ENCODE measurements at regions of chr5 and their contacts with region 1.

Region 1: DNA sequence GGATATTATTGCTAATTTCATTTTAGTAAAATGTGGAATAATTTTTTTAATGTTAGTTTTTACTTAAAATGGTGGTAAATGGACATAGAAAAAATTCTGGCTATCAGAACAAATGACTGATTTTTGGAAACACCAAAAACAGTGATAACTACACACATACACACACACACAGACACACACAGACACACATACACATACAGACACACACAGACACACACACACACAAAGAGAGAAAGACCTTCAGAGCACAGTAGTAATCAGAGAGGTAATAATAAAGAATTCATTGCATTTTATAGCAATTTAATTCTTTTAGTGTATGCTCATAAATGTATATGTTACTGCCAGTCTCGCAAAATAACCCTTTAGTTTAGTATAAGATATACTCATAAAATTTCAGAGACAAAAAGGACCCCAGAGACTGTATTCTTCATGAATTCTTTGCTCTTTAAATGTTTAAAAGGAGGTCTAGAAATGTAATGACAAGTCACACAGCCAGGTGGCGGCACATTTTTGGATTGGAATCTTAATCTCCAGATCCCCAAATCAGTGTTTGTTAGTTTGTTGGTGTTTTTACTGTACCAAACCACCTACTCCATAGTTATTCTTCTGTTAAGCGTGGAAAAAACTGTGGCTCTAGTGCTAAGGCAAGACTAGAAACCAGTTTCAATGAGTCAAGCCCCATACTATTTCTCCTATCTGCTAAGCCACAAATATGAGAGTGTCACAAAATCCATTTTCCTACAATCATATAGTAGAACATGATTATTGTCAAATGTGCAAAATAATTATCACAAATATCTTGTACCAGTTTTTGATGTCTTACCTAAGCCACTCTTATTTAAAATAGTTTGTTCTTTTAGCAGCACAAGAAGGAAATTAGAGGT is 109.9 kb downstream of the EDIL3 start:
- DNase-seq: peak in 1 of 5 donors; percentile 9
- ATAC-seq: no peak
- H3K4me3 ChIP-seq: no peak overlapping the region
- H3K27ac ChIP-seq: no peak overlapping the region
- H3K4me1 ChIP-seq: peaks cover 0 to 3% (median 0%) of the 10 kb centered on the region in 12 donors
- H3K27me3 ChIP-seq: no peaks in the 10 kb centered on the region
- CTCF ChIP-seq: peak in 11 of 12 donors; percentile 22 to 54 (median 38)
- POLR2A ChIP-seq: no peak

Region 2: DNA sequence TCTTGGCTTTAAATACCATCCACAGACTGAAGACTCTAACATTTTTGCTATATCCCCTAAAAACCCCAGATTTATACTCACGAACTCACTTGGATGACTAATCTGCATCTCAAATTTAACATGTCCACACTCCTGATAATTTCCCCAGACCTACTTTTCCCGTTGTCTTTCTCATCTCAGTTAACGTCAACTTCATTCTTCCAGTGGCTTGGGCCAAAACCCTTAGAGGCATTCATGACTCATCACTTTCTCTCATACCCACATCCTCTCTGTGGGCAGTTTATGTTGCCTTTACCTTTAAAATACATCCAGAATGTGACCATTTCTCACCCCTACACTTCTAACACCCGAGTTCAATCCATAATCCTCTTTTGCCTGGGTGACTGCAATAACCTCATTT is 13.1 kb after region 1 on chr5:
- intact Hi-C with region 1: no loop called
- DNase-seq: no peak
- ATAC-seq: no peak
- H3K4me3 ChIP-seq: no peak overlapping the region
- H3K27ac ChIP-seq: no peak overlapping the region
- H3K4me1 ChIP-seq: peaks cover 0 to 15% (median 4%) of the 10 kb centered on the region in 12 donors
- H3K27me3 ChIP-seq: no peaks in the 10 kb centered on the region
- CTCF ChIP-seq: no peak
- POLR2A ChIP-seq: no peak

Region 3: DNA sequence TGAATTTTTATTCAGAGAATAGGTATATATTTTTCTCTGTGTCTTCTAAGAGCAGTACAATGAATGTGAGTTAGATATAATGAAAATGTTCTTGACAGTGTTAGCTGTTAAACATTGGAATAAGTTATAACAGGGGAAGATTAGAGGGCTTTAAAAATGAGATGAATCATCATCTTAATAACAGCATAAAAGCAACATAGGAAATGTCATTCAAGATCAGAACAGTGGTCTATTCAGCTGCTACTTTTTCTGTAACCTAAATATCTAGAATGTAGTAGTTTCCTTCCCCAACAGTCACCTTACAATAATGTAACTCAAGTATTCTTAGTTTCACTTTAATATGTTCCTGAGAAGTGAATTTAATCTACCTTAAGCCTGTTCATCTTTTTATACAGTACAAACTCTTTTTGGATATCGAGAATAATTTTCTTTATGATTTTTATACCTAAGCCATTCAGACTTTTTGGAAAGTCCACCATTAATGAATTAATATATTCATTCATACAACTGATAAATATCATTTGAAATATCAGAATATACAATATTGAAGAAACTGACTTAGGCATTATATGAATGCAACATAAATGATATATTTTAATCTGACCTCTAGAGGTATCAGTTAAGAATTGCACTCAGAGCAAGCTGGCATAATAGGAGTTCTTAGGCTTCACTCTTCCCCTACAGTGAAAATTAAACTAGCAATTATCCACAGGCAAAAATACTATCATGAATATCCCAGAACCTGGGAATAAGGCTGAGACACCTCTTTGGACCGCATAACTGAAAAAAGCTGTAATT is 176.0 kb after region 1 on chr5:
- intact Hi-C with region 1: loop called in 1 of 10 experiments (anchors 10 kb)
- DNase-seq: no peak
- ATAC-seq: no peak
- H3K4me3 ChIP-seq: no peak overlapping the region
- H3K27ac ChIP-seq: no peak overlapping the region
- H3K4me1 ChIP-seq: no peaks in the 10 kb centered on the region
- H3K27me3 ChIP-seq: no peaks in the 10 kb centered on the region
- CTCF ChIP-seq: peak in 7 of 12 donors; percentile 8 to 41 (median 27)
- POLR2A ChIP-seq: no peak

Region 4: DNA sequence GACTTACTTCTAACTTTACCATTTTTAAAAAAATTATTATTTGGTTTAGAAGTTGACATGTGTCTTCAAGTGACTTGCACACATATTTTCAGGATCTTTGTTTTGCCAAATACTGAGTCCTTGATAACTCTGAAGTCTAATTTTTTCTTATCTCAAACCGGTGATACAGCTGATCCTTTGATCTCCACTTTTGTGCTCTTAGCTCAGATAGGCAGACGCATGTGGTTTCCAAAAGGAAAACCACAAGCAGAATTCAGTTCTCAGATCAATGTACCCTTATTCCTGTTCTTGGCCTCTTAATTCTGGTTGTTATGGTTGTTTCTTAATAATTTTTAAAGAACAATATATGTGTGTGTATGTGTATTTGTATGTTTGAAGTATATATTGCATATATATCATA is 348.2 kb after region 1 on chr5:
- intact Hi-C with region 1: no loop called
- DNase-seq: no peak
- ATAC-seq: no peak
- H3K4me3 ChIP-seq: no peak overlapping the region
- H3K27ac ChIP-seq: no peak overlapping the region
- H3K4me1 ChIP-seq: no peaks in the 10 kb centered on the region
- H3K27me3 ChIP-seq: no peaks in the 10 kb centered on the region
- CTCF ChIP-seq: no peak
- POLR2A ChIP-seq: no peak

Region 5: GRCh38 chr5:85049020-85049419 is 774.2 kb after region 1 on chr5:
- intact Hi-C with region 1: loop called in 5 of 10 experiments (anchors 5 to 10 kb)
- DNase-seq: no peak
- ATAC-seq: peak in 3 of 4 donors; percentile 38 to 72 (median 61)
- H3K4me3 ChIP-seq: no peak overlapping the region
- H3K27ac ChIP-seq: no peak overlapping the region
- H3K4me1 ChIP-seq: peaks cover 0 to 4% (median 0%) of the 10 kb centered on the region in 12 donors
- H3K27me3 ChIP-seq: no peaks in the 10 kb centered on the region
- CTCF ChIP-seq: peak in 9 of 12 donors; percentile 22 to 47 (median 35)
- POLR2A ChIP-seq: no peak

Measured in heart left ventricle (tissue), 16 donors.